Endothelial cell of umbilical vein (primary cell): ENCODE measurements at regions of chr17 and their contacts with region 1.

Region 1: GRCh38 chr17:52790359-52790955 is 631.9 kb upstream of the CA10 start:
- DNase-seq: peak; percentile 58
- H3K4me3 ChIP-seq: no peak overlapping the region
- H3K27ac ChIP-seq: peak overlapping the region; percentile 72
- H3K4me1 ChIP-seq: peaks cover 25% of the 10 kb centered on the region
- H3K27me3 ChIP-seq: no peaks in the 10 kb centered on the region
- CTCF ChIP-seq: no peak
- POLR2A ChIP-seq: no peak

Region 2: DNA sequence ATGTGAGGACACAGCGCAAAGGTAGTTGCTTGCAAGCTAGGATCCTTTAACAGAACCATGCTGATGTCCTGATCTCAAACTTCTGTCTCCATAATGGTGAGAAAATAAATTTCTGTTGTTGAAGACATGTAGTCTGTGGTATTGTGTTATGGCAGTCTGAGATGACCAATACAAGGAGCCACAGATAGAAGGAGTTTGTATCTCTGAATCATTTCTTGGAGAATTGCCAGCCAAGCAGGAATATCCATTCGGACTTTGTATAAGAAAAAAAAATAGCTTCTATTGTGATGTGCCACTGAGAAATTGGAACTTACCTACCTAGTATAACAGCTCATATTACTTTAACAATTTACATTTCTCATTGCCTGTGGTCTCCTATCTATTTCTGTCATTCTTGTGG is 184.4 kb before region 1 on chr17:
- CTCF ChIA-PET with region 1: no interaction called
- POLR2A ChIA-PET with region 1: no interaction called
- dilution Hi-C with region 1: no loop called
- intact Hi-C with region 1: loop called (anchors 5 kb)
- DNase-seq: peak; percentile 60
- H3K4me3 ChIP-seq: no peak overlapping the region
- H3K27ac ChIP-seq: no peak overlapping the region
- H3K4me1 ChIP-seq: peaks cover 11% of the 10 kb centered on the region
- H3K27me3 ChIP-seq: no peaks in the 10 kb centered on the region
- CTCF ChIP-seq: no peak
- POLR2A ChIP-seq: no peak